CD8-positive, alpha-beta T cell (primary cell): ENCODE measurements at regions of chr6 and their contacts with region 1.

Region 1: GRCh38 chr6:35650015-35650414 is 38.7 kb downstream of the FKBP5 start:
- DNase-seq: no peak
- ATAC-seq: no peak
- H3K4me3 ChIP-seq: no peak overlapping the region
- H3K4me3 Mint-ChIP-seq: no peak overlapping the region
- H3K27ac ChIP-seq: no peak overlapping the region
- H3K27ac Mint-ChIP-seq: no peak overlapping the region
- H3K4me1 ChIP-seq: peaks cover 37% of the 10 kb centered on the region
- H3K4me1 Mint-ChIP-seq: peaks cover 56% of the 10 kb centered on the region
- H3K27me3 ChIP-seq: no peaks in the 10 kb centered on the region
- H3K27me3 Mint-ChIP-seq: no peaks in the 10 kb centered on the region
- CTCF ChIP-seq: no peak

Region 2: GRCh38 chr6:35327349-35328027 is 322.5 kb before region 1 on chr6:
- CTCF ChIA-PET with region 1: no interaction called
- POLR2A ChIA-PET with region 1: no interaction called
- intact Hi-C with region 1: no loop called
- DNase-seq: peak; percentile 61 to 86 (median 82)
- ATAC-seq: peak; percentile 81
- H3K4me3 ChIP-seq: no peak overlapping the region
- H3K4me3 Mint-ChIP-seq: peak overlapping the region; percentile 42
- H3K27ac ChIP-seq: peak overlapping the region in 1 of 2 experiments; percentile 62
- H3K27ac Mint-ChIP-seq: peak overlapping the region; percentile 88
- H3K4me1 ChIP-seq: peaks cover 19% of the 10 kb centered on the region
- H3K4me1 Mint-ChIP-seq: peaks cover 21% of the 10 kb centered on the region
- H3K27me3 ChIP-seq: no peaks in the 10 kb centered on the region
- H3K27me3 Mint-ChIP-seq: no peaks in the 10 kb centered on the region
- CTCF ChIP-seq: peak; percentile 68

Region 3: DNA sequence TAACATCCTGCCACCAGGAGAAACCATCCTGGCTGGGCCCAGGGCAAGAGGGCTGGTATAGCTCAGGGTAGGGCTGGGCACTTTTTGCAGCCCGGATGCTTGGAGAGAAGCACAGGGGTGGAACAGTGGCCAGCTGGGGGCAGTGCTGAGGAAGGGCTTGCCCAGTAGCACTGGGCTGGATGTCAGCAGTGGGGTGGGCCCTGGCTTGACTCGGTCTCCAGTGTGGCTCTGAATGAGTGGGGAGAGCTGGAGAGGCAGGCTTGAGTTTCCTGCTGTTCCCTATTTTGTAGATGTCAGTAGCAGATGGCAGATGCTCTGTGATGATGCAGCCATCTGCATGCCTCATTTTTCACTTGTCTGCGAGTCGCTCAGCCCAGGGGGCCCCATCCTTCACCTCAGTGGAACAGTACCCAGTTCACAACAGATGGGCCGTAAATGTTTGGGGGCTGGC is 81.0 kb before region 1 on chr6:
- CTCF ChIA-PET with region 1: no interaction called
- POLR2A ChIA-PET with region 1: no interaction called
- intact Hi-C with region 1: no loop called
- DNase-seq: peak in 7 of 9 experiments; percentile 5 to 62 (median 40)
- ATAC-seq: peak; percentile 48
- H3K4me3 ChIP-seq: no peak overlapping the region
- H3K4me3 Mint-ChIP-seq: no peak overlapping the region
- H3K27ac ChIP-seq: no peak overlapping the region
- H3K27ac Mint-ChIP-seq: peak overlapping the region; percentile 66
- H3K4me1 ChIP-seq: no peaks in the 10 kb centered on the region
- H3K4me1 Mint-ChIP-seq: peaks cover 8% of the 10 kb centered on the region
- H3K27me3 ChIP-seq: no peaks in the 10 kb centered on the region
- H3K27me3 Mint-ChIP-seq: peaks cover 4% of the 10 kb centered on the region
- CTCF ChIP-seq: no peak

Region 4: GRCh38 chr6:35634316-35634715 is 15.7 kb before region 1 on chr6:
- CTCF ChIA-PET with region 1: interaction called, 4 read pairs
- POLR2A ChIA-PET with region 1: interaction called, 3 read pairs
- intact Hi-C with region 1: loop called in 1 of 2 experiments (anchors 2 kb)
- DNase-seq: no peak
- ATAC-seq: no peak
- H3K4me3 ChIP-seq: no peak overlapping the region
- H3K4me3 Mint-ChIP-seq: no peak overlapping the region
- H3K27ac ChIP-seq: no peak overlapping the region
- H3K27ac Mint-ChIP-seq: peak overlapping the region; percentile 85
- H3K4me1 ChIP-seq: no peaks in the 10 kb centered on the region
- H3K4me1 Mint-ChIP-seq: peaks cover 36% of the 10 kb centered on the region
- H3K27me3 ChIP-seq: no peaks in the 10 kb centered on the region
- H3K27me3 Mint-ChIP-seq: no peaks in the 10 kb centered on the region
- CTCF ChIP-seq: no peak

Region 5: GRCh38 chr6:35669451-35670045 is 19.5 kb after region 1 on chr6:
- CTCF ChIA-PET with region 1: interaction called, 4 read pairs
- POLR2A ChIA-PET with region 1: interaction called, 3 read pairs
- intact Hi-C with region 1: loop called in 1 of 2 experiments (anchors 2 kb)
- DNase-seq: peak in 2 of 9 experiments; percentile 37 to 64
- ATAC-seq: peak; percentile 63
- H3K4me3 ChIP-seq: peak overlapping the region; percentile 21 to 26
- H3K4me3 Mint-ChIP-seq: peak overlapping the region; percentile 73
- H3K27ac ChIP-seq: peak overlapping the region; percentile 17 to 62
- H3K27ac Mint-ChIP-seq: peak overlapping the region; percentile 89
- H3K4me1 ChIP-seq: peaks cover 73% of the 10 kb centered on the region
- H3K4me1 Mint-ChIP-seq: peaks cover 50% of the 10 kb centered on the region
- H3K27me3 ChIP-seq: no peaks in the 10 kb centered on the region
- H3K27me3 Mint-ChIP-seq: no peaks in the 10 kb centered on the region
- CTCF ChIP-seq: no peak